ENCODE measurements at regions of chr10 and their contacts with region 1.

Region 1: DNA sequence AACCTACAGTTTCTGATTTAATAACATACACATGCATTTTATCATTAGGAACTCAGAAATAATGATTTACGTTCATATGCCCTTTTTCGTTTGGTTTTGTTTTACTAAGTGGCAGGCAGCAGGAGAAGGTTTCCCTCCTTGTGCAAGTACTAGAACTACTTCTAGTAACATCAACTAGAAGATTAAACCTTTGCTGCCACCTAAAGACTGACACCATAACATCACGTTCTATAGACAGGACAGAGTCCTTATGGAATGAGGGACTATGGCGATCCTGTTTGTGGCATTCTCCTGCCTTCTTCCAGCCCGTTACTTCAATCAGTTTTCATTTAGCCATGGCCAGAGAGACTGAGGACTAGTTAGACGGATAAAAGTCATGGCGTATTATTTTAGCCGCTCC is 53.2 kb downstream of the GAD2 start:
- DNase-seq: no peak
- ATAC-seq: no peak
- H3K4me3 ChIP-seq: no peak overlapping the region
- H3K27ac ChIP-seq: no peak overlapping the region
- H3K4me1 ChIP-seq: no peaks in the 10 kb centered on the region
- H3K27me3 ChIP-seq: peaks cover 0 to 19% (median 0%) of the 10 kb centered on the region in 9 donors
- CTCF ChIP-seq: peak in 4 of 12 donors; percentile 13 to 28 (median 24)
- POLR2A ChIP-seq: no peak

Region 2: GRCh38 chr10:25875556-25876165 is 394.1 kb before region 1 on chr10:
- intact Hi-C with region 1: loop called in 5 of 10 experiments (anchors 2 to 10 kb)
- DNase-seq: peak; percentile 41 to 69 (median 61)
- ATAC-seq: peak in 1 of 4 donors; percentile 59
- H3K4me3 ChIP-seq: no peak overlapping the region
- H3K27ac ChIP-seq: no peak overlapping the region
- H3K4me1 ChIP-seq: no peaks in the 10 kb centered on the region
- H3K27me3 ChIP-seq: peaks cover 0 to 7% (median 0%) of the 10 kb centered on the region in 9 donors
- CTCF ChIP-seq: peak; percentile 73 to 86 (median 82)
- POLR2A ChIP-seq: no peak

Region 3: GRCh38 chr10:26488344-26488743 is 218.6 kb after region 1 on chr10:
- intact Hi-C with region 1: no loop called
- DNase-seq: no peak
- ATAC-seq: no peak
- H3K4me3 ChIP-seq: no peak overlapping the region
- H3K27ac ChIP-seq: peak overlapping the region in 1 of 12 donors; percentile 64
- H3K4me1 ChIP-seq: peaks cover 0 to 77% (median 8%) of the 10 kb centered on the region in 12 donors
- H3K27me3 ChIP-seq: no peaks in the 10 kb centered on the region
- CTCF ChIP-seq: no peak
- POLR2A ChIP-seq: no peak